Activated CD8-positive, alpha-beta T cell treated with anti-CD3 and anti-CD28 coated beads for 36 hours (primary cell): ENCODE measurements at regions of chr18 and their contacts with region 1.

Region 1: GRCh38 chr18:58051765-58052460 is 7.9 kb downstream of the NEDD4L start:
- DNase-seq: no peak
- ATAC-seq: no peak
- H3K4me3 Mint-ChIP-seq: no peak overlapping the region
- H3K27ac Mint-ChIP-seq: no peak overlapping the region
- H3K4me1 Mint-ChIP-seq: peaks cover 4% of the 10 kb centered on the region
- H3K27me3 Mint-ChIP-seq: no peaks in the 10 kb centered on the region
- CTCF ChIP-seq: no peak

Region 2: GRCh38 chr18:57998461-57998860 is 53.5 kb before region 1 on chr18:
- CTCF ChIA-PET with region 1: no interaction called
- POLR2A ChIA-PET with region 1: no interaction called
- intact Hi-C with region 1: no loop called
- DNase-seq: no peak
- ATAC-seq: no peak
- H3K4me3 Mint-ChIP-seq: no peak overlapping the region
- H3K27ac Mint-ChIP-seq: no peak overlapping the region
- H3K4me1 Mint-ChIP-seq: no peaks in the 10 kb centered on the region
- H3K27me3 Mint-ChIP-seq: peaks cover 10% of the 10 kb centered on the region
- CTCF ChIP-seq: no peak

Region 3: GRCh38 chr18:58032233-58032632 is 19.7 kb before region 1 on chr18:
- CTCF ChIA-PET with region 1: no interaction called
- POLR2A ChIA-PET with region 1: no interaction called
- intact Hi-C with region 1: no loop called
- DNase-seq: no peak
- ATAC-seq: no peak
- H3K4me3 Mint-ChIP-seq: no peak overlapping the region
- H3K27ac Mint-ChIP-seq: no peak overlapping the region
- H3K4me1 Mint-ChIP-seq: no peaks in the 10 kb centered on the region
- H3K27me3 Mint-ChIP-seq: peaks cover 14% of the 10 kb centered on the region
- CTCF ChIP-seq: no peak

Region 4: GRCh38 chr18:58117786-58118403 is 66.0 kb after region 1 on chr18:
- CTCF ChIA-PET with region 1: interaction called, 11 read pairs
- POLR2A ChIA-PET with region 1: no interaction called
- intact Hi-C with region 1: no loop called
- DNase-seq: no peak
- ATAC-seq: no peak
- H3K4me3 Mint-ChIP-seq: no peak overlapping the region
- H3K27ac Mint-ChIP-seq: no peak overlapping the region
- H3K4me1 Mint-ChIP-seq: peaks cover 6% of the 10 kb centered on the region
- H3K27me3 Mint-ChIP-seq: no peaks in the 10 kb centered on the region
- CTCF ChIP-seq: no peak

Region 5: DNA sequence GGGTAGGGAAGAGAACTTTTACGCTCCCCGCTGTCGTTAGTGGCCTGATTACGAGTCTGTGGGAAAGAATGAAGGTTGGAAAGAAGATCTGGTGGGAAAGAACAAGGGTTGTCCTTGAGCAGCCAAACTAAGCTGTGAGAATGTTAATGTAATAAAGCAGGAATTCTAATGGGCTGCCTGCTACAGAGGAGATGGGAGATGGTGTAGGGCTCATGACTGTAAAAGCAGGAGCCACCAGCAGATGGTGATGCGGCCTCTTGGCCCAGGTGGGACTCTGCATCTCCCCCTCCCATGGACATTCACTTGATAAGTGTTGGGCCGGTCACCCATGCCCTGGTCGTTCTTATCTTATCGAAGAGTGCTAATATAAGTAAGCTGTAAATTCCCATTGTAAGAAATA is 142.1 kb after region 1 on chr18:
- CTCF ChIA-PET with region 1: no interaction called
- POLR2A ChIA-PET with region 1: no interaction called
- intact Hi-C with region 1: no loop called
- DNase-seq: no peak
- ATAC-seq: no peak
- H3K4me3 Mint-ChIP-seq: no peak overlapping the region
- H3K27ac Mint-ChIP-seq: no peak overlapping the region
- H3K4me1 Mint-ChIP-seq: peaks cover 16% of the 10 kb centered on the region
- H3K27me3 Mint-ChIP-seq: peaks cover 14% of the 10 kb centered on the region
- CTCF ChIP-seq: no peak